Breast epithelium (tissue), 4 donors: ENCODE measurements at regions of chr2 and their contacts with region 1.

Region 1: DNA sequence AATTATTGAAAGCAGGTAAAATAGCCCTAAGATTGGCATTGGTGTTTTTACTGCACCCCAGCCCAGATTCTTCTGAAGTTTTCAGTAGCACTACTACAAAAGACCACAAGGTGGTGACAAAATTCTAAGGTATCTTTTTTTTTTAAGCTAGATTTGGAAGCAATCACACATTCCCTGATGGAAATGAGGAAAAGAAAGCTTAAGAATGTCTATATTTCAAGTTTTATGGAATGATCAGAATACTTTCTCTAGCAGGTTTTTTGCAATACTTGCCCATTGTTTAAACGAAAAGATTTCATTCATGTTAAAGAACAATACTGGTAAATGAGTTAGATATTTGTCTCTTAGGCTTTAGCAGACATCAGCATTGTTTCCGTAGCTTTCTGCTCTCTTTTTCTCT is 32.1 kb upstream of the ZNF638 start:
- DNase-seq: no peak
- H3K4me3 ChIP-seq: no peak overlapping the region
- H3K27ac ChIP-seq: no peak overlapping the region
- H3K4me1 ChIP-seq: no peaks in the 10 kb centered on the region
- H3K27me3 ChIP-seq: no peaks in the 10 kb centered on the region
- CTCF ChIP-seq: peak in 2 of 3 donors; percentile 59 to 61
- POLR2A ChIP-seq: no peak

Region 2: GRCh38 chr2:71157124-71157793 is 142.2 kb before region 1 on chr2:
- intact Hi-C with region 1: no loop called
- DNase-seq: no peak
- H3K4me3 ChIP-seq: peak overlapping the region in 2 of 3 donors; percentile 11 to 27
- H3K27ac ChIP-seq: no peak overlapping the region
- H3K4me1 ChIP-seq: no peaks in the 10 kb centered on the region
- H3K27me3 ChIP-seq: no peaks in the 10 kb centered on the region
- CTCF ChIP-seq: peak in 2 of 3 donors; percentile 33 to 44
- POLR2A ChIP-seq: no peak

Region 3: GRCh38 chr2:71269511-71270090 is 29.9 kb before region 1 on chr2:
- intact Hi-C with region 1: no loop called
- DNase-seq: no peak
- H3K4me3 ChIP-seq: no peak overlapping the region
- H3K27ac ChIP-seq: no peak overlapping the region
- H3K4me1 ChIP-seq: no peaks in the 10 kb centered on the region
- H3K27me3 ChIP-seq: no peaks in the 10 kb centered on the region
- CTCF ChIP-seq: no peak
- POLR2A ChIP-seq: no peak

Region 4: GRCh38 chr2:71505086-71505769 is 205.7 kb after region 1 on chr2:
- intact Hi-C with region 1: loop called (anchors 10 kb)
- DNase-seq: no peak
- H3K4me3 ChIP-seq: no peak overlapping the region
- H3K27ac ChIP-seq: no peak overlapping the region
- H3K4me1 ChIP-seq: no peaks in the 10 kb centered on the region
- H3K27me3 ChIP-seq: no peaks in the 10 kb centered on the region
- CTCF ChIP-seq: no peak
- POLR2A ChIP-seq: no peak